Breast epithelium (tissue), 4 donors: ENCODE measurements at regions of chr4 and their contacts with region 1.

Region 1: GRCh38 chr4:74758551-74759145 is 35.7 kb downstream of the BTC start:
- DNase-seq: no peak
- H3K4me3 ChIP-seq: no peak overlapping the region
- H3K27ac ChIP-seq: no peak overlapping the region
- H3K4me1 ChIP-seq: peaks cover 0 to 3% of the 10 kb centered on the region in 2 donors
- H3K27me3 ChIP-seq: no peaks in the 10 kb centered on the region
- CTCF ChIP-seq: no peak
- POLR2A ChIP-seq: no peak

Region 2: DNA sequence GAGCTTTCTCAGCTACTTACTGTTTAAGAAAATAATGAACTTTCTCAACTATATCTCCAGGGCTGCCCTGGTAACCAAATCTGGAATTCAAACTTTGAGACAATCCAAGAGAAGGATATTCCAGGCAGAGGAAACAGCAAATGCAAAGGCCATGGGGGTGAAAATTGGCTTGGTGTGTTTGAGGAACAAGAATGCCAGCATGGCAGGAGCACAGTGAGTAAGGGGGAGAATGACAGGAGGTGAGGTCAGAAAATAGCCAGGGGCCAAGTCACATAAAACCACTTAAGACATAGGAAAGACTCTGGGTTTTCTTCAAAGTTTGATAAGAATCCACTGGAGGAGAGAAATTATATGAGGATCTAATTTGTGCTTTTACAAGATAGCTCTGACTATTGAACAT is 62.9 kb after region 1 on chr4:
- intact Hi-C with region 1: loop called (anchors 2 kb)
- DNase-seq: no peak
- H3K4me3 ChIP-seq: no peak overlapping the region
- H3K27ac ChIP-seq: no peak overlapping the region
- H3K4me1 ChIP-seq: no peaks in the 10 kb centered on the region
- H3K27me3 ChIP-seq: no peaks in the 10 kb centered on the region
- CTCF ChIP-seq: no peak
- POLR2A ChIP-seq: no peak